Posterior vena cava (tissue), 2 donors: ENCODE measurements at regions of chr14 and their contacts with region 1.

Region 1: DNA sequence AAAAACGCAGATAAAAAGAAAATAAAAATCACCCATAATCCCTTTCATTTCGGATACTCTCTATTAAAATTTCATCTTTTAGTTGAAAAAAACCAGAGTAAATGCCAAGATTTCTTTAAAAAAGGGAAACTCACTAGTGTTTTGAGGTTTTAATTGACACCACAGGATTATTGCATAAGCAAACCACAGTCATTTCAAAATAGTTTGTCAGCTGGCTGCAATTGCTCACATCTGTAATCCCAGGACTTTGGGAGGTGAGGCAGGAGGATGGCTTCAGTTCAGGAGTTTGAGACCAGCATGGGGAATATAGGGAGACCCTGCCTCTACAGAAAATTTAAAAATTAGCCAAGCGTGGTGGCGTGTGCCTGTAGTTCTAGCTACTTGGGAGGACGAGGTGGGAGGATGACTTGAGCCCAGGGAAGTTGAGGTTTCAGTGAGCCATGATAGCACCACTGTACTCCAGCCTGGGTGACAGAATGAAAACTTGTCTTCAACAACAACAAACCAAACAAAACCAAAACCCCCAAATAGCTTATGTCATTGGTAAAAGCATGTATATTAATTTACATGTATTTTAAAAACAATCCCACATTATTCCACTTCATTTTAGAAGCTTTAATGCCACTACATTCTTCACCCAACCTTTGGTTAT is 48.8 kb downstream of the SYNE2 start:
- DNase-seq: no peak

Region 2: GRCh38 chr14:63933110-63933509 is 31.6 kb after region 1 on chr14:
- intact Hi-C with region 1: loop called in 1 of 2 experiments (anchors 1 kb)
- DNase-seq: no peak

Region 3: DNA sequence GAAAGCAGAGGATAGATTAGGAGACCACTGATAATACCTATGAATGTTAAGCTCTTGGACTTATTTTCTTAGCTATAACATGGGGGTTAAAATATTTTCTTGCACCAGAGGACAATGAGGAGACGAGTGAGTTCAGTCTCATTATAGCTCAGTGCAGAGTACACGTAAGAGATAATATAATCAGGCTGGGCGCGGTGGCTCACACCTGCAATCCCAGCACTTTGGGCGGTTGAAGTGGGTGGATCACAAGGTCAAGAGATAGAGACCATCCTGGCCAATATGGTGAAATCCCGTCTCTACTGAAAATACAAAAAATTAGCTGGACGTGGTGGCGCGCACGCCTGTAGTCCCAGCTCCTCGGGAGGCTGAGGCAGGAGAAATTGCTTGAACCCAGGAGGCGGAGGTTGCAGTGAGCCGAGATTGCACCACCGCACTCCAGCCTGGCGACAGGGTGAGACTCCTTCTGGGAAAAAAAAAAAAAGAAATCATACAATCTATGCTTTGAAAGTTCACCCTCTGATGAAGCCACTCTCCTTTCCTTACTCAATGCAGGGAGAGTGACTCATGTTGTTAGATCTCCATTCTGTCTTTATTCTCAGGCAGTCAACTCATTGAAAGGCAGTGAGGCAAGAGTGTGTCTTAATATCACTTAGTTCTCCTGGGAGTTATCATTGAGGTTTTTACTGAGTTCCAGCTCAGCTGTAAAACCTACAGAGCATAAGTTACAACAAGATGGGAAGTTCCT is 85.4 kb after region 1 on chr14:
- intact Hi-C with region 1: no loop called
- DNase-seq: no peak